ENCODE measurements at regions of chr3 and their contacts with region 1.

Region 1: GRCh38 chr3:52001443-52001974 is 5.8 kb upstream of the RPL29 start:
- DNase-seq: peak; percentile 91
- ATAC-seq: peak; percentile 97
- H3K4me3 Mint-ChIP-seq: no peak overlapping the region
- H3K27ac Mint-ChIP-seq: no peak overlapping the region
- H3K4me1 Mint-ChIP-seq: peaks cover 16% of the 10 kb centered on the region
- H3K27me3 Mint-ChIP-seq: no peaks in the 10 kb centered on the region

Region 2: DNA sequence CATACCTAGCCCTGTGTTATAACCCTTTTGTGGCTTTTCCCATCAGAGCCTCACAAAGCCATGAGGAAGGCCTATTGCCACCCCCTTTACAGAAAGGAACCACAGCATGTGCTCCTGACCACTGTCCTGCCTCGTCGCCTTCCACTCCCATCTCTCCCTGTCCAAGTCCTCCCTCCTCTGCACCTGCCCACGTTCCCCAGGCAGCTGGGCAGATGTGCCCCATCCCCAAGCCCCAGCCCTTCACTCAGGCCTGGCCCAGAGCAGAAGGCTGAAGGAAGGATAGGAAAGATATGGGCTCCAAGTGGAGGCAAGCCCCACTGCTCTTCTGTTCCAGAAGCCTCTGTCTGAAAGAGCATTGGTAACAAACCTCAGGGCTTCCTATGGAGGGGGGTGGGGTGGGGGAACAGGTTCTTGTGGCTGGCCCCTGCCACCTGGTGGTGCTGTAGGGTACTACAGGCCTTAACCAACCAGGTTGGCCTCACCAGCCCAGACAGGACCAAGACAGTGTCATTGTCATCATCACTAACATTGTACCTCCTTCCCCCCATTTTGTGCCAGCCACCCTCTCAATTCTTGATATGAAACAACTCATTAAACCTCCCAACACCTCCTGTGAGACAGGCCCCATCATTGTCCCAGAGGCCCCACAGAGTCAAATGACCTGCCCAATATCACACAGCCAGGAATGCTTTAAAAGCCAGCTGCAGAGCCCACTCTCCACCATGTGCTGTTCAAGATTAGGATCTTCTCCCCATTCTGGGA is 142.7 kb after region 1 on chr3:
- CTCF ChIA-PET with region 1: interaction called, 14 read pairs
- POLR2A ChIA-PET with region 1: no interaction called
- intact Hi-C with region 1: loop called (anchors 1 kb)
- DNase-seq: peak; percentile 91
- ATAC-seq: peak; percentile 96
- H3K4me3 Mint-ChIP-seq: no peak overlapping the region
- H3K27ac Mint-ChIP-seq: no peak overlapping the region
- H3K4me1 Mint-ChIP-seq: peaks cover 7% of the 10 kb centered on the region
- H3K27me3 Mint-ChIP-seq: no peaks in the 10 kb centered on the region

Measured in activated CD4-positive, alpha-beta T cell treated with anti-CD3 and anti-CD28 coated beads for 36 hours (primary cell).